ENCODE measurements at regions of chr6 and their contacts with region 1.

Region 1: GRCh38 chr6:164911873-164912580 is 397.4 kb downstream of the C6orf118 start:
- DNase-seq: no peak
- H3K4me3 ChIP-seq: peak overlapping the region in 57 of 59 donors; percentile 3 to 59 (median 33)
- H3K27ac ChIP-seq: peak overlapping the region in 5 of 59 donors; percentile 8 to 33 (median 18)
- H3K27me3 ChIP-seq: no peaks in the 10 kb centered on the region
- CTCF ChIP-seq: peak in 3 of 56 donors; percentile 10 to 16 (median 11)

Region 2: DNA sequence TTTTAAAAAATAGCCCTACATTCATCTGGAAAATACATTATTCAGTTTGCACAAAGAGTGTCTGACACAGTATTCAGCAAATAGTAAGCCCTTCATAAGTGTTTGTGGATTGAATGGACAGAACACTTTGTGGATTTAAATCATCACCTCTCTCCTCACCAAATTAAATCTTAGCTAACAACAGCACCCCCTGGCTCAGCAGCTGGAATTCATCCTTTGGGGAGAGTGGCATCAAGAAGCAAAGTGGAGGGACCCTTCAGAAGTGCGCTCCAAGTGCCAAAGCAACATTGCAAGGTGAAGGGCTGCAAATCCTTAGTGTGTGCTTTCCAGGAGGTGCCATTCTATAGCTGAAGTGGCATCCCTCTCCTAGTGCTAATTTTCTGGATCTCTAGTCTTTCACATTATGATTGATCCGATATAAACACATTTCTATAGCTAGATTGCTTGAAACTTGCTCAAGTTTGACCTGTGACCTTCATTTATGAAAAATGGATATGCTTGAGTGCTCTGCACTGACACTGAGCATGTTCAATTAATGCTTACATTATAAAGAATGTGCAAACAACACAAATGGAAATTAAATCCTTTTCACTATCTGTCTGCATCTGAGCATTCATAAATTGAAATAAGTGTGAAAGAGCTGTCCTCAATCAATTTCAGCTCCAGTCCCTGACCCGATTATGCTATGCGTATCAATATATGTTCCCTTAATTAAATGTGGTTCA is 494.3 kb before region 1 on chr6:
- intact Hi-C with region 1: loop called in 1 of 2 experiments (anchors 10 kb)
- DNase-seq: no peak
- H3K4me3 ChIP-seq: no peak overlapping the region
- H3K27ac ChIP-seq: peak overlapping the region in 1 of 59 donors; percentile 57
- H3K27me3 ChIP-seq: no peaks in the 10 kb centered on the region
- CTCF ChIP-seq: peak in 27 of 56 donors; percentile 4 to 43 (median 23)

Region 3: GRCh38 chr6:164749221-164750064 is 162.6 kb before region 1 on chr6:
- intact Hi-C with region 1: loop called in 1 of 2 experiments (anchors 10 kb)
- DNase-seq: peak in 7 of 10 donors; percentile 32 to 74 (median 47)
- H3K4me3 ChIP-seq: peak overlapping the region in 21 of 59 donors; percentile 2 to 48 (median 16)
- H3K27ac ChIP-seq: peak overlapping the region in 41 of 59 donors; percentile 2 to 76 (median 43)
- H3K27me3 ChIP-seq: no peaks in the 10 kb centered on the region
- CTCF ChIP-seq: no peak

Region 4: GRCh38 chr6:164826831-164827442 is 85.1 kb before region 1 on chr6:
- intact Hi-C with region 1: loop called in 1 of 2 experiments (anchors 5 kb)
- DNase-seq: no peak
- H3K4me3 ChIP-seq: peak overlapping the region in 53 of 59 donors; percentile 1 to 57 (median 36)
- H3K27ac ChIP-seq: peak overlapping the region in 6 of 59 donors; percentile 7 to 49 (median 14)
- H3K27me3 ChIP-seq: no peaks in the 10 kb centered on the region
- CTCF ChIP-seq: no peak

Region 5: DNA sequence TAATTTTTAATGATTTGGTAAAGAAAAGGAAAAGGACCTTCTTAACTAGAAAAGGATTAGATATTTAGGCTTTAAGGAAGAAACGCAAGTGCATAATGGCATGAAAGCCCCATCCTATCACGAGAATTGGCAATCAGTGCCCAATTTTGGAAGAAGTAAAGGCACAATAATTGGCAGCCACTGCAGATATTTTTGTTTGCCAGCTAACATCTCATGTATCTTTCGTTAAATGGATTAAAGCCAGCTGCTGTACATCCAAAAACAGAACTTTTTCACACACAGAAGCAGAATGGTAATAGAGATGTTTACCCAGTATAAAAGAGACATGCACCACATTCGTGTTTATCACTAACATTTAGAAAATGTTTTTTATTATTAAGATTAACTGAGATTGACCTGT is 217.1 kb after region 1 on chr6:
- intact Hi-C with region 1: no loop called
- DNase-seq: no peak
- H3K4me3 ChIP-seq: no peak overlapping the region
- H3K27ac ChIP-seq: peak overlapping the region in 18 of 59 donors; percentile 3 to 65 (median 42)
- H3K27me3 ChIP-seq: no peaks in the 10 kb centered on the region
- CTCF ChIP-seq: no peak

Measured in dorsolateral prefrontal cortex (tissue), 120 donors.